CD4-positive, alpha-beta T cell (primary cell): ENCODE measurements at regions of chr2 and their contacts with region 1.

Region 1: DNA sequence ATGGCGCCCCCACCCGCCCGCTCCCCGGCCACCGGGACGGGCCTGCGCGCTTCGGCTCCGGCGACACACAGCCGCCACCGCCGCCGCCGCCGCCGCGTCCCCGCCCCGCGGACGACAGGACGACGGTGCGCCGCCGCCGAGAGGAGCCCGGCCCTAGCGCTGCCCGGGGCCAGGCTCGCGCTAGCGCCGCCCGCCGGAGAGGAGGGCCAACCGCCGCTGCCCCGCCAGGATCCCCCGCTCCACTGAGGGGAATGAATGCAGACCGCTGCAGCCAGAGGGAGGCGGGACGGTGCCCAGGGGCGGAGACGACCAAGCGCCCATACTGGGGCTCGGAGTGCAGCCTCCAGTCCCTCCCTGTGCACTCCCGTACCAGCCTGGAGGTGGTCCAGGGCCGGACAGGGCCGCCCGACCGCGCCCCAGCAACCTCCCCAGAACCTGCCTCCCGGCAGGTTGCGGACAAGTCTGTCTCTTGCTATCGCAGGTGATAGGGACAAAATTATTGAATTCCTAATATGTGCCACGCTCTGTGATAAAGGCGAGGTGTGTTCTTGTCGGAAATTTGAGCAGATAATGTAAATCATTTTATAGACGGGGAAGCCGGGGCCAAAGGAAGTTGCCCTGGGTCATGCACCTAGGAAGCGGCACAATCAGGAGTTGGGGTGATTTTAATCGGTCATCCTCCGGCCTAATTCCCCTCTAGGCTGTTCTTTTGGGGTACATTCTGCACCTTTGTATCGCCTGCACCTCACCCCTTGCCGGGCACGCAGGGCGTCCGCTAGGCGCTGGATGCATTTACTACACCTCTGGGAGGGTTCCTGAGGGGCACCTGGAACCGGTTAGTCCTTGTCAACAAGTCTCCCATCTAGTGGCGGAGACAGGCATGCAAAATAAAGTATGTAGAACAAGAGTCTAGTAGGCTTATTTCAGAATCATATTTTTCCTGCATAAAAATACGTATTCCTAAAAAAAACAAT is at the start of gene TEX261:
- DNase-seq: peak; percentile 78 to 95 (median 89)
- ATAC-seq: peak; percentile 92
- H3K4me3 ChIP-seq: peak within 1 kb of the TSS; percentile 90
- H3K4me3 Mint-ChIP-seq: peak within 1 kb of the TSS; percentile 99
- H3K27ac ChIP-seq: peak within 1 kb of the TSS; percentile 35 to 62
- H3K27ac Mint-ChIP-seq: peak within 1 kb of the TSS; percentile 90
- H3K4me1 ChIP-seq: peaks cover 33% of the 10 kb centered on the region
- H3K4me1 Mint-ChIP-seq: peaks cover 37% of the 10 kb centered on the region
- H3K27me3 ChIP-seq: no peaks in the 10 kb centered on the region
- H3K27me3 Mint-ChIP-seq: no peaks in the 10 kb centered on the region
- CTCF ChIP-seq: peak; percentile 58
- total RNA-seq, gene TEX261: 26.8 to 34.0 TPM

Region 2: DNA sequence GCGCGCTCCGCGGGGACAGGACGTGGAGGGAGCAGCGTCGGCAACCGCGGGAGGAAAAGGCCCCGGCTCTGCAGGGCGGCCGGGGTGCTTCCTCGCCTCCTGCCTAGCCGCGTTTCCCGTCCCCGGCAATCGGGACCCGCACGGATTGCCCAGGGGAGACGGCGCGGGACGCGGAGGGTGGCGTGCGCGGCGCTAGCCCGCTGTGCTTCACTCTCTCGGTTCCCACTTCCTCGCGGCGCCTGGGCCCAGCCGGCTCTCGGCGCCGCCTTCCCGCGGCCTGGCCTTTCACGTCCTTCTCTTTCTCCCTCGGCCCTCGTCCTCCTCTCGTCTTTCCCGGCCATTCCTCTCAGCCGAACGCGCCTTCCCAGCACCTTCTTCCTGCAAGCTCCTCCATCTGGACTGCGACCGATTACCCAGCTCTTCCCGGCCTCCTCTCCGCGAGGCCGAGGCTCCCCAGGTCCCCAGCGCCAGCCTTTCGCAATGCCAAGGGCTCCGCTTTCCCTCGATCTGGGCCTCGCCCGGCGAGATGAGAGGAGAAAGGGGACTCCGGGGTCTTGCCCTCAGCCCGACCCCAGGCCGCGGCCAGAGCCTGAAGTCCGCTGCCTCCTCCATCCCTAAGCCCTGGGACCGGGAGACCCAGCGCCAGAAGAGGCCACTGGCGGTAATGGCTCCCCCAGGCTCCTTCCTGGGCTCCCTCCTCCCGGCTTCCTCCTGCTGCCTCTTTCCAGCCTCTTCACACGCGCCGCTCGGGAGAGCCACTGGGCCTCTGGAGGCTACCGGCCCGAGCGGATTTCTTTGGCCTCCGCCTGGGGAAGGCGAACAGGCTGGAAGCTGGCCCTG is 93.6 kb before region 1 on chr2:
- CTCF ChIA-PET with region 1: no interaction called
- POLR2A ChIA-PET with region 1: no interaction called
- intact Hi-C with region 1: no loop called
- DNase-seq: peak in 1 of 14 experiments; percentile 37
- ATAC-seq: peak; percentile 32
- H3K4me3 ChIP-seq: peak overlapping the region; percentile 34
- H3K4me3 Mint-ChIP-seq: peak overlapping the region; percentile 80
- H3K27ac ChIP-seq: no peak overlapping the region
- H3K27ac Mint-ChIP-seq: no peak overlapping the region
- H3K4me1 ChIP-seq: peaks cover 28% of the 10 kb centered on the region
- H3K4me1 Mint-ChIP-seq: peaks cover 34% of the 10 kb centered on the region
- H3K27me3 ChIP-seq: peaks cover 89 to 97% of the 10 kb centered on the region in 2 experiments
- H3K27me3 Mint-ChIP-seq: peaks cover 98% of the 10 kb centered on the region
- CTCF ChIP-seq: no peak

Region 3: GRCh38 chr2:70964596-70965386 is 30.3 kb before region 1 on chr2:
- CTCF ChIA-PET with region 1: interaction called, 7 read pairs
- POLR2A ChIA-PET with region 1: no interaction called
- intact Hi-C with region 1: loop called in 1 of 2 experiments (anchors 1 kb)
- DNase-seq: peak; percentile 71 to 92 (median 79)
- ATAC-seq: peak; percentile 99
- H3K4me3 ChIP-seq: peak overlapping the region; percentile 63
- H3K4me3 Mint-ChIP-seq: peak overlapping the region; percentile 87
- H3K27ac ChIP-seq: no peak overlapping the region
- H3K27ac Mint-ChIP-seq: no peak overlapping the region
- H3K4me1 ChIP-seq: peaks cover 11% of the 10 kb centered on the region
- H3K4me1 Mint-ChIP-seq: peaks cover 8% of the 10 kb centered on the region
- H3K27me3 ChIP-seq: peaks cover 17 to 19% of the 10 kb centered on the region in 2 experiments
- H3K27me3 Mint-ChIP-seq: peaks cover 41% of the 10 kb centered on the region
- CTCF ChIP-seq: peak; percentile 91

Region 4: DNA sequence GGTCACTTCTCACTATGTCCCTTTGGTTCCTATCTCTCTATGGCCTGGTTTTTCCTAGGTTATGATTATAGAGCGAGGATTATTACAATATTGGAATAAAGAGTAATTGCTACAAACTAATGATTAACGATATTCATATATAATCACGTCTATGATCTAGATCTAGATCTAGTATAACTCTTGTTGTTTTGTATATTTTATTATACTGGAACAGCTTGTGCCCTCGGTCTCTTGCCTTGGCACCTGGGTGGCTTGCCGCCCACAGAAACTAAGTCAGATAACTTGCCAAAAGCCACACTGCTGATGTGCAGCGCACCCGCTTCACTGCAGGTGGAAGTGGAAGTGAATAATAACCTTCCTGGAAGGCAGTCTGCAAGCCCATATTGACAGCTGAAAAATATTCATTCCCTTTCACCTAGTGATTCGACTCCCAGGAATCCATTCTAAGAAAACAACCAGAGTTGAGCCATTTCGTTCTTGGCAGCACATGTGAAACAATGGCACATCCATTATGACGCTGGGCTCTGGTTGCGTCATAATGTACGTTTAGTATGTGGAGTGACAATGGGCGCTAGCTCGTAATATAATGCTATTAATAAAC is 17.3 kb before region 1 on chr2:
- CTCF ChIA-PET with region 1: no interaction called
- POLR2A ChIA-PET with region 1: no interaction called
- intact Hi-C with region 1: loop called in 1 of 2 experiments (anchors 2 kb)
- DNase-seq: peak in 4 of 14 experiments; percentile 49 to 63 (median 55)
- ATAC-seq: peak; percentile 37
- H3K4me3 ChIP-seq: peak overlapping the region; percentile 76
- H3K4me3 Mint-ChIP-seq: peak overlapping the region; percentile 91
- H3K27ac ChIP-seq: peak overlapping the region in 1 of 2 donors; percentile 58
- H3K27ac Mint-ChIP-seq: peak overlapping the region; percentile 67
- H3K4me1 ChIP-seq: peaks cover 24% of the 10 kb centered on the region
- H3K4me1 Mint-ChIP-seq: peaks cover 20% of the 10 kb centered on the region
- H3K27me3 ChIP-seq: no peaks in the 10 kb centered on the region
- H3K27me3 Mint-ChIP-seq: no peaks in the 10 kb centered on the region
- CTCF ChIP-seq: peak; percentile 26

Region 5: DNA sequence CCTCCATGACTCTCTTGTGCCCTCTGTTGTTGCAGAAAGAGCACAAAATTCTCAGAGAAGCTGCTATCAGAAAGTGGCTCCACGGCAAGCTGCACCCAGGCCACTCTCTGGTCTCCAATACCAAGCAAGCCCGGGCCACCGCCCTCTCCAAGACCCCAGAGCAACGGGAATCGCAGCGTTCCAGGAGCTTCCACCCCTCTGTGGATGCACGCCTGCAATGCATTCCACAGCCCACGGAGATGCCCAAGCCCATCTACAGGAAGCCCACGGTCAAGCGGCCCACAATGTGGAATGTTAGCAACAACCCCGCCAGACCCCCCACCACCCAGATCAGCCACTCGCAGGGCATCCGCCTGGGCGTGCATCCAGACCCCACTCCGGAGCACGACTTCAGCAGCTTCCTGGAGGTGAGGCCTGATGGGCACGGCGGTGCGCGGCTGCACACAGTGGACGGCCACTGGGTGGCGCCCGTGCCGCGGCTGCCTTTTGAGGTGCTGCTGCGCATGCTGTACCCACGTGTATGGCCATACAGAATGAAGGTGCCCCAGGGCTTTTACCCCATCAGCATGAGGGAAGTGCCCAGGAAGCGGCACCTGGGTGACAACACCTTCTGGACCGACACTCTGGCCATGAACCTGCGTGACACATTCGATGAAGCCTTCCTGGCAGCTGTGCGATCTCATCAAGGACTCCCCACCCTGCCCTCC is 10.3 kb before region 1 on chr2:
- CTCF ChIA-PET with region 1: interaction called, 25 read pairs
- POLR2A ChIA-PET with region 1: interaction called, 3 read pairs
- intact Hi-C with region 1: loop called (anchors 1 to 2 kb)
- DNase-seq: peak; percentile 71 to 90 (median 80)
- ATAC-seq: peak; percentile 100
- H3K4me3 ChIP-seq: no peak overlapping the region
- H3K4me3 Mint-ChIP-seq: peak overlapping the region; percentile 23
- H3K27ac ChIP-seq: no peak overlapping the region
- H3K27ac Mint-ChIP-seq: peak overlapping the region; percentile 27
- H3K4me1 ChIP-seq: peaks cover 12% of the 10 kb centered on the region
- H3K4me1 Mint-ChIP-seq: peaks cover 22% of the 10 kb centered on the region
- H3K27me3 ChIP-seq: no peaks in the 10 kb centered on the region
- H3K27me3 Mint-ChIP-seq: no peaks in the 10 kb centered on the region
- CTCF ChIP-seq: peak; percentile 90

Region 6: DNA sequence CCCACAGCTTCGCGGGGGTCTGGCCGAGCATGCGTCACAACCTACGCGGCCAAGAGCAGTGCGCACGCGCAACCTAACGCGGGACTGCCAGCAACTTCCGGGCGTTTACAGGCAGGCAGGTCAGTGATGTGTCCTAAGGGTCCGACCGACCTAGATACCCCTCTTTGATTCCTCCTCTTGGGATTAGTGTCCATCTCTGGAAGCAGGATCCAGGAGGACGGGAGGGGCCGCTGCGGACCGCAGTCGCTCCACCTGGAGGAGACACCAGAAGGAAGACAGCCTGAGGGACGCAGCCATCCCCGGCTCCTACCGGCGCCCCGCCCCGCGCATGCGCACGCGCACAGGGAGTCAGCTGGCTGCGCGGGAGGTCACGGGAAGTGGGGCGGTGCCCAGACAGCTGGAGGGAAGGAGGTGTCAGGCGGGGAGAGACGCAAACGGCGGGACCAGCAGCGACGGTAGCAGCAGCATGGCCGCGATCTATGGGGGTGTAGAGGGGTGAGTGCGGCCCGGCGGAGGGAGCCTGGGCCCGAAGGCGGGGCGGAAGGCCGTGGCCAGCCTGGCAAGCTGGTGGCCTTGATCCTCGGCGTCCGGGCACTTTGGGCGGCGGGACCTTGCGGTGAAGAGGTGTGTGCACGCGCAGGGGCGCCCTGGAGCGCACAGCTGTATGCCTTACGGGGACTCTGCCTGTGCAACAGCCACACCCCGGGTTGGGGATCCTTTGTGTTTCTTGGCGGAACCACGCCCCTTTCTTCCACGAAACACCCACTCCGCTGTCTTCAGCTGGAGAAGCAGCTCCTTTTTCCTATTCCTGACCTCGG is 73.4 kb after region 1 on chr2 and contains the start of gene NAGK:
- CTCF ChIA-PET with region 1: interaction called, 5 read pairs
- POLR2A ChIA-PET with region 1: interaction called, 9 read pairs
- intact Hi-C with region 1: loop called in 1 of 2 experiments (anchors 5 kb)
- DNase-seq: peak; percentile 94 to 99 (median 97)
- ATAC-seq: peak; percentile 78
- H3K4me3 ChIP-seq: peak within 1 kb of the TSS; percentile 97
- H3K4me3 Mint-ChIP-seq: peak within 1 kb of the TSS; percentile 99
- H3K27ac ChIP-seq: peak within 1 kb of the TSS; percentile 91 to 98
- H3K27ac Mint-ChIP-seq: peak within 1 kb of the TSS; percentile 99
- H3K4me1 ChIP-seq: peaks cover 56% of the 10 kb centered on the region
- H3K4me1 Mint-ChIP-seq: peaks cover 68% of the 10 kb centered on the region
- H3K27me3 ChIP-seq: no peaks in the 10 kb centered on the region
- H3K27me3 Mint-ChIP-seq: no peaks in the 10 kb centered on the region
- CTCF ChIP-seq: no peak
- total RNA-seq, gene NAGK: 62.3 to 73.3 TPM

Region 7: GRCh38 chr2:71130113-71130904 is 135.3 kb after region 1 on chr2 and contains the starts of genes MCEE and MPHOSPH10:
- CTCF ChIA-PET with region 1: no interaction called
- POLR2A ChIA-PET with region 1: no interaction called
- intact Hi-C with region 1: loop called in 1 of 2 experiments (anchors 2 kb)
- DNase-seq: peak; percentile 82 to 94 (median 88)
- ATAC-seq: peak; percentile 89
- H3K4me3 ChIP-seq: peak within 1 kb of the TSS; percentile 95
- H3K4me3 Mint-ChIP-seq: no peak within 1 kb of the TSS
- H3K27ac ChIP-seq: peak within 1 kb of the TSS; percentile 77 to 89
- H3K27ac Mint-ChIP-seq: no peak within 1 kb of the TSS
- H3K4me1 ChIP-seq: peaks cover 24% of the 10 kb centered on the region
- H3K4me1 Mint-ChIP-seq: peaks cover 36% of the 10 kb centered on the region
- H3K27me3 ChIP-seq: no peaks in the 10 kb centered on the region
- H3K27me3 Mint-ChIP-seq: no peaks in the 10 kb centered on the region
- CTCF ChIP-seq: no peak
- total RNA-seq, gene MCEE: 4.3 to 8.0 TPM
- total RNA-seq, gene MPHOSPH10: 36.7 to 38.2 TPM

Region 8: DNA sequence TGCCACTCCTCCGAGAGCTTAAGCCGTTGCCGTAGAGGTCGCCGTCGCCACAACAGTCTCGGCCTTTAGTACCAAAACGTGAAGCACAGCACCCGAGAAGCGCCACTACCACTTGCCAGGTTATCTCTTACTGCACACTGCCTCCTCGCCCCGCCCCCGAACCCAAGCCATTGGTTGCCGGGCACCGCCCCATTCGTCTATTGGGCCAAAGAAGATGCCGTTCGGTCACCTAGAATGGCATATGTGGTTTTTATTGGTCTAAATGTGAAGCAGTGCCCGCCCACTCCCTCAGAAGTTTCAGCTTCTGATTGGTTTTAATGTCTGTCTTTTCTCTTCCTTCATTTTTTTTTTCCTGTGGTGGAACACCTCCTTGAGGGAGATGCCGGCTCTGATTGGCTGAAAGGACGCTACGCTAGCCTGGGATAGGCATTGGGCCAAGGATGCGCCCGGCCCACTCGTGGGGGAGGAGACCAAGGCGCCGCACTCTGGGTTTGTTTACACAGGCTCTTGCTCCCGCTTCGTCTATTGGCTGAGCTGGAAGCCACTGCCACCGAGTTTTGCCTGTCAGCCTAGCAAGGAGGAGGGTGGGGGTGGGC is 232.0 kb after region 1 on chr2 and contains the start of gene PAIP2B:
- CTCF ChIA-PET with region 1: no interaction called
- POLR2A ChIA-PET with region 1: no interaction called
- intact Hi-C with region 1: loop called in 1 of 2 experiments (anchors 10 kb)
- DNase-seq: peak; percentile 96 to 99 (median 98)
- ATAC-seq: peak; percentile 89
- H3K4me3 ChIP-seq: peak within 1 kb of the TSS; percentile 70
- H3K4me3 Mint-ChIP-seq: peak within 1 kb of the TSS; percentile 90
- H3K27ac ChIP-seq: peak within 1 kb of the TSS; percentile 42 to 64
- H3K27ac Mint-ChIP-seq: peak within 1 kb of the TSS; percentile 84
- H3K4me1 ChIP-seq: peaks cover 15% of the 10 kb centered on the region
- H3K4me1 Mint-ChIP-seq: peaks cover 28% of the 10 kb centered on the region
- H3K27me3 ChIP-seq: no peaks in the 10 kb centered on the region
- H3K27me3 Mint-ChIP-seq: peaks cover 12% of the 10 kb centered on the region
- CTCF ChIP-seq: no peak
- total RNA-seq, gene PAIP2B: 2.3 to 2.5 TPM